RWPE1 (cell line): ENCODE measurements at regions of chr11 and their contacts with region 1.

Region 1: DNA sequence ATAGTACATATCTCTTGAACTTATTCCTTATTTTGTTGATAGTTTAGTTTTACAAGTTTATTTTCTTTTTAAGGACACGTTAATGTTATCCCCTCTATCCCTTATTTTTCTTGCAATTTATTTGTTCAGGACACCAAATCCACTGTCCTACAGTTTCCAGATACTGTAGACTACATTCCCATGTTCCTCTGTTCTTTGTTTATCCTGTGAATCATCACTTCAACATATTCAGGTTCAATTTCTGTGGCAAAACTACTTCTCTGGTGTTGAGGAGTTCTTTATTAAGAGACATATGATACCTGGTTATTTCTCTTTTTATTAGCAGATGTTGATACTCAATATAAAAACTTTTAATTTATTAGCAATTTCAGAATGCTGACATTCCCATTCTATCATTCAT is 72.8 kb upstream of the CLNS1A start:
- DNase-seq: peak; percentile 8
- H3K27ac ChIP-seq: no peak overlapping the region
- CTCF ChIP-seq: no peak

Region 2: GRCh38 chr11:77647654-77648305 is 62.6 kb before region 1 on chr11:
- CTCF ChIA-PET with region 1: interaction called, 4 read pairs
- POLR2A ChIA-PET with region 1: interaction called, 13 read pairs
- DNase-seq: no peak
- H3K27ac ChIP-seq: no peak overlapping the region
- CTCF ChIP-seq: no peak

Region 3: DNA sequence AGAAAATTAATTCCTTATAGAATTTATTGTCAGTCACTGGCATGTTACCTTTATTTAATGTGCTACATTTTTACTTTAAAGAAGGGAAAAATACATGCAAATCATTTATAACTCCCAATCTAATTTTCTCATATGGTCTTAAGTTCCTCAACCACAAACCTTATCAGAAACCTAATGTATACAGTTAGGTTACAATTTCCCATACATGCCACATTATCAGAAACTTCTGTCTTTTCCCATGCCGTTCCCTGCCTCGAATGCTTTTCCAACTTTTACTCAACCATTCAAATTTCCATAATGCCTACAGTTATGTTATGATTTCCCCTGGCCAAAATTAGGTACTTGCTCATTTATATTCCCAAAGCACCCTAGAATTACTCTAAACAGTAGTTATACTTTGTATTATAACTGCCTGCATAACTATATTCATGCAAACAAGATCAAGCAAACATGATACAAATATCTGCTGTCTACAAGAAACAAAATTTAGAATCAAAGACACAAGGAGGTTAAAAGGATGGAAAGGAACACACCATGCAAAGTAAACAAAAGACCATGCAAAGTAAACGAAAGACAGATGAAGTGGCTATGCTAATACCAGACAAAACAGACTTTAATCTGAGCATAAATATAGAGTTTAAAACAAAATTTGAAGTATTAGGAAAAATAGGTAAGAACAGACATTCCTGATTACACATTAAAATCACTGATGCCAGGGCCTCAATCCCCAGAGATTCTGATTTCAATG is 96.8 kb after region 1 on chr11:
- CTCF ChIA-PET with region 1: no interaction called
- POLR2A ChIA-PET with region 1: no interaction called
- DNase-seq: no peak
- H3K27ac ChIP-seq: no peak overlapping the region
- CTCF ChIP-seq: no peak